Panc1 (cell line): ENCODE measurements at regions of chr17 and their contacts with region 1.

Region 1: GRCh38 chr17:10888858-10889257 is 51.0 kb upstream of the PIRT start:
- DNase-seq: no peak
- ATAC-seq: no peak
- H3K4me3 ChIP-seq: no peak overlapping the region
- H3K27ac ChIP-seq: no peak overlapping the region
- H3K4me1 ChIP-seq: no peaks in the 10 kb centered on the region
- H3K27me3 ChIP-seq: no peaks in the 10 kb centered on the region
- CTCF ChIP-seq: no peak

Region 2: DNA sequence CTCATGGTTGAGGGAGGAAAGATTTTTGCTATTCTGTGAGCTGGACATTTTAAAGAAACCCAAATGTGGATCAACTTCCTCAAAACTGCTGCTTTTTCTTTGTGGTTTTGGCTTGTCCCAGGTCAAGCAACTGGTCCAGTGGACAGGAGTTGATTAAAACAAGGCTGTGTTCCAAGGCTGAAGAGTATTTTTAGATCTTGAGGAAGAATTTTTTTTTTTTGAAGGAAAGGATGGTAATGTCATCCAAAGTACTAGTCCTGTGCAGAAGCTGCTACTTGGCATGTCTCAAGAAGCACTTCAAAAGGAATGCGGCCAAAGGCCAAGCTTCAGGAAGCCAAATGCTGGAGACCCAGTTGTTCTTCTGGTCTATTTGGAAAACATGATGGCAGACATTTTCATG is 331.4 kb before region 1 on chr17:
- CTCF ChIA-PET with region 1: no interaction called
- POLR2A ChIA-PET with region 1: no interaction called
- in situ Hi-C with region 1: no loop called
- intact Hi-C with region 1: no loop called
- DNase-seq: no peak
- ATAC-seq: no peak
- H3K4me3 ChIP-seq: no peak overlapping the region
- H3K27ac ChIP-seq: no peak overlapping the region
- H3K4me1 ChIP-seq: no peaks in the 10 kb centered on the region
- H3K27me3 ChIP-seq: no peaks in the 10 kb centered on the region
- CTCF ChIP-seq: no peak

Region 3: DNA sequence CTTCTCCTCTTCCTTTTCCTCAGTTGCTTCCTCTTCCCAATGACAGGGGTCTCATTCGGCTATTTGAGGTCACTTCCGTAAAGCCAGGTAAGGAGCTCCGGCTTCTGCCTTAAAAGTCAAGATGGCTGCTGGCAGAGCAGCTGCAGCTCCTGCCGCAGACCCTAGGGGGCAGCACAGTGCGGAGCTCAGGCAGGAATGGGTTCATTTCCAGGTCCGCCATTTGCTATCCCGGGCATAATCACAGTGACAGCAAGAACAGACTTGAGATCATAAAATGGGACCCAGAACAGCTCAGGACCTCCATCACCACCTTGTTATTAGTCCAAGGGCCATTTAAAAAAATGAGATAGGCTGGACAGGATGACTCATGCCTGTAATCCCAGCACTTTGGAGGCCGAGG is 908.9 kb after region 1 on chr17:
- CTCF ChIA-PET with region 1: no interaction called
- POLR2A ChIA-PET with region 1: interaction called, 14 read pairs
- in situ Hi-C with region 1: no loop called
- intact Hi-C with region 1: no loop called
- DNase-seq: no peak
- ATAC-seq: no peak
- H3K4me3 ChIP-seq: no peak overlapping the region
- H3K27ac ChIP-seq: no peak overlapping the region
- H3K4me1 ChIP-seq: no peaks in the 10 kb centered on the region
- H3K27me3 ChIP-seq: no peaks in the 10 kb centered on the region
- CTCF ChIP-seq: peak; percentile 46